ENCODE measurements at regions of chr2 and their contacts with region 1.

Region 1: GRCh38 chr2:157055660-157056199 is 201.8 kb upstream of the GALNT5 start:
- DNase-seq: peak; percentile 53
- ATAC-seq: 0 out of 2 replicates have a peak, but pooled peaks have one; percentile 19
- H3K4me3 ChIP-seq: no peak overlapping the region
- H3K27ac ChIP-seq: peak overlapping the region; percentile 42; the same call in 1 of the 2 replicates
- H3K4me1 ChIP-seq: peaks cover 7% of the 10 kb centered on the region
- H3K27me3 ChIP-seq: no peaks in the 10 kb centered on the region
- CTCF ChIP-seq: peak; percentile 57
- POLR2A ChIP-seq: no peak
- RAD21 ChIP-seq: peak; percentile 58

Region 2: GRCh38 chr2:155377266-155377680 is 1678.5 kb before region 1 on chr2:
- CTCF ChIA-PET with region 1: no interaction called
- POLR2A ChIA-PET with region 1: no interaction called
- dilution Hi-C with region 1: no loop called
- in situ Hi-C with region 1: no loop called
- intact Hi-C with region 1: loop called (anchors 5 kb)
- DNase-seq: peak; percentile 35
- ATAC-seq: no peak
- H3K4me3 ChIP-seq: no peak overlapping the region
- H3K27ac ChIP-seq: no peak overlapping the region
- H3K4me1 ChIP-seq: no peaks in the 10 kb centered on the region
- H3K27me3 ChIP-seq: no peaks in the 10 kb centered on the region
- CTCF ChIP-seq: peak; percentile 43
- POLR2A ChIP-seq: no peak
- RAD21 ChIP-seq: peak; percentile 46

Region 3: DNA sequence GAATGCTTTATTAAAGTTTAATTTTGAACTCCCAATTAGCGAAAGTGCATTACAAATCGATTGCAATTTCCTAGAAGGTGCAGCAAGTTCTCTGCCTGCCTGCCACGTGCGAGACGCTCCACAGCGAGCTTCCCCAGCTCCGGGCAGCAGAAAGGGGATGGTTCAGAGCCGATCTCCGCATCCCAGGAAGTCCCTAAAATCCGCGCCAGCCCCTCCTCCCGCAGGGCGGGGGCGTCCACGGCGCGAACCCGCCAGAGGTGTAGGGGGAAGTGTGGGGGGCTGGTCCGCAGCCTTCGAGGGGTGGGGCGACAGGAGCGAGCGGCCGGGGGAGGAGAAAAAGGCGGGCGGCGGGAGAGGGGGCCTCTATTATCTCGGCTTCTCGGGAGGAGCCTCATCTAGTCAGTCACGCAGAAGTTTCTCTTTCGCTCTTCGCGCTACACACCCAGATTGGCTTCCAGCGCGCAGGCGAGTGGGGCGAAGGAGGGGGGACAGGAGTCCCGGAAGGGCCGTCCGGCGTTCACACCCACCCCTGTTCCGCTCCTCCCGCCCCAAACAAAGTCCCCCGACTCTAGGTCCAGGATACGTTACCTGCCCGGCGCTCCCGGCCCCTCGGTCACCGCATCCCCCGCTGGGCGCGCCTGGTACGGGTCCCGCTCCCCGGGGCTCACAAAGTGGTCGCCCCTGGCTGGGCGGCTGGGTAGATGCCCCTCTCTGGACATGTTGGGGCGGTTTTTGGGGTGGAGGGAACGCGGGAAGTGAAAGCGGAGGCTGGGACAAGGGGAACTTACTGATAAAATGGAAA is 714.1 kb before region 1 on chr2:
- CTCF ChIA-PET with region 1: no interaction called
- POLR2A ChIA-PET with region 1: no interaction called
- dilution Hi-C with region 1: no loop called
- in situ Hi-C with region 1: loop called (anchors 25 kb)
- intact Hi-C with region 1: no loop called
- DNase-seq: peak; percentile 94
- ATAC-seq: peak; percentile 85
- H3K4me3 ChIP-seq: peak overlapping the region; percentile 85
- H3K27ac ChIP-seq: peak overlapping the region; percentile 96
- H3K4me1 ChIP-seq: no peaks in the 10 kb centered on the region
- H3K27me3 ChIP-seq: no peaks in the 10 kb centered on the region
- CTCF ChIP-seq: no peak
- POLR2A ChIP-seq: peak; percentile 94
- RAD21 ChIP-seq: peak; percentile 18; the same call in 1 of the 2 replicates

Region 4: GRCh38 chr2:156589381-156590079 is 466.2 kb before region 1 on chr2:
- CTCF ChIA-PET with region 1: no interaction called
- POLR2A ChIA-PET with region 1: no interaction called
- dilution Hi-C with region 1: no loop called
- in situ Hi-C with region 1: no loop called
- intact Hi-C with region 1: loop called (anchors 5 kb)
- DNase-seq: peak; percentile 62
- ATAC-seq: peak; percentile 74
- H3K4me3 ChIP-seq: no peak overlapping the region
- H3K27ac ChIP-seq: no peak overlapping the region
- H3K4me1 ChIP-seq: no peaks in the 10 kb centered on the region
- H3K27me3 ChIP-seq: no peaks in the 10 kb centered on the region
- CTCF ChIP-seq: peak; percentile 72
- POLR2A ChIP-seq: no peak
- RAD21 ChIP-seq: peak; percentile 85

Region 5: DNA sequence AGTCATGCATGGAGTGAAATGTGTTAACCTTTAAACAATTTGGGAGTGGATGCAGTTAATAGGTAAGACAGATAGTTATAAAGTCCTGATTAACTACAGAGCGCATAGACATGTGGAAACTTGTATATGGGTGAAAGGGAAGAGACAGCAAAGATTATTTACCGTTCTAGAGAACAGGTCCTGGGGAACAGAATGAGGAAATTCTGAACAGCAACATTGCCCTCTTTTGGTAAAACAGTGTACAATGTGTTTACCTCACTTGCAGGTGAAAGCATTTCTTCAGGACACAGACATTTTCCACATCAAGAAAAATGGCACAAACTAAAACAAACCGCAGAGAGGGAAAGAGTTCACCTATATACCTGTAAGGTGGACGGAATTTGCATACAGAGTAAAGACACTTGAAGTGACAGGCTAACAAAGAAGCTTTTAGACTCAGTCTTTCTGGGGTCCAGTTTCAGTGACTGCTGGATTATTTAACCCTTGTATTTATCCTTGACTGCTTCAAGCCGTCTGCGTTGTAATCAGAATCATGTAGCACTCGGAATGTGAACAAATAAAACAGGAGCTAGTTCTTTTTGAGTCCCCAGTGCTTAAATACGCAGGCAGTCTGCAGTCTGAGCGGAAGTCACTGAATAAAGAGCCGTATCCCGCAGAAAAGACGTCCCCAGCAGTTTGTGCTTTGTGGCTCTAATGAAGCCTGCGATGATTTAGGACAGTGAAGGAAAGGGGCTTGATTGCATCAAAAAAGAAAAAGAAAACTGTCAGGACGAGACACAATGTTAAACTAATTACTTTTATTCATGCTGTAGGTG is 163.1 kb before region 1 on chr2:
- CTCF ChIA-PET with region 1: interaction called, 3 read pairs
- POLR2A ChIA-PET with region 1: no interaction called
- dilution Hi-C with region 1: no loop called
- in situ Hi-C with region 1: no loop called
- intact Hi-C with region 1: loop called (anchors 5 kb)
- DNase-seq: peak; percentile 60
- ATAC-seq: peak; percentile 79
- H3K4me3 ChIP-seq: peak overlapping the region; percentile 20
- H3K27ac ChIP-seq: no peak overlapping the region
- H3K4me1 ChIP-seq: no peaks in the 10 kb centered on the region
- H3K27me3 ChIP-seq: no peaks in the 10 kb centered on the region
- CTCF ChIP-seq: peak; percentile 46
- POLR2A ChIP-seq: no peak
- RAD21 ChIP-seq: peak; percentile 56

Region 6: GRCh38 chr2:157182834-157183396 is 127.2 kb after region 1 on chr2:
- CTCF ChIA-PET with region 1: interaction called, 3 read pairs
- POLR2A ChIA-PET with region 1: no interaction called
- dilution Hi-C with region 1: no loop called
- in situ Hi-C with region 1: no loop called
- intact Hi-C with region 1: loop called (anchors 2 kb)
- DNase-seq: peak; percentile 97
- ATAC-seq: peak; percentile 80
- H3K4me3 ChIP-seq: no peak overlapping the region
- H3K27ac ChIP-seq: peak overlapping the region; percentile 92
- H3K4me1 ChIP-seq: peaks cover 20% of the 10 kb centered on the region
- H3K27me3 ChIP-seq: no peaks in the 10 kb centered on the region
- CTCF ChIP-seq: no peak
- POLR2A ChIP-seq: peak; percentile 69
- RAD21 ChIP-seq: no peak; the same call in 1 of the 2 replicates